GM12878 (cell line): ENCODE measurements at regions of chr17 and their contacts with region 1.

Region 1: DNA sequence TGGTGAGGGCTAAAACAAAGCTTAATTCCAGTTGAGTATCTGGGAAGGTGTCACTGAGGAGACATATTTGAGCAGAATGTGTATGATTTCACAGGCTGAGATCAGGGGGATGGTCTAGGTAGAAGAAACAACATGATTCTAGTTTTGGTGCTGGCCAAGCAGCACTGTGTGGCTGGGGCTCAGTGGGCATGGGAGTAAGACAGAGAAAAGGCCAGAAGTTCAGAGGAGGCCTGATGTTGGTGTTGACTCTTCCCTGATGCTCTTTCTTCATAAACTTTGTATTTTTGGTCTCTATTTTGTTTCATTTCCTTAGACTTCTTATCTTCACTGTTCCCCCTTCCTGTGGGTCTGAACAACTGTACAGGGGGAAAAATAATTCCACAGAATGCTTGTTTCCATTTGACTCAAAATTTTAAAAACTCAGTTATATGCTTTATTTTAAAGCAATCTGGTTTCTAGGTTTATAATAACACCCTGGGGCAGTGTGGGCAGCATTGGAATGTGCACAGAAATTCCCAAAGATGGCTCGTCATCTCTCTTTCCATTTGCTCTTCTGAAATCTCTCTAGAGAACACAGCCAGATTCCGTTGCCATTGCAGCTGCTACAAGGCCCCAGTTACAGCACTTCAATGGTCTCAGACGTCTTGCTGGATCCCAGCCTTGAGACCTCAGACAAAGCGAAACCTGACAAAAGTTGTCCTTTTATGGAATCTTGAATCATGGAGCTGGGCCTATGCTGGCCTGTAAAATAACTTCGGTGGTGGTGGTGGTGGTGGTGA is 68.3 kb downstream of the SNX11 start:
- DNase-seq: no peak
- ATAC-seq: no peak
- H3K4me3 ChIP-seq: no peak overlapping the region
- H3K27ac ChIP-seq: no peak overlapping the region
- H3K4me1 ChIP-seq: peaks cover 6% of the 10 kb centered on the region
- H3K27me3 ChIP-seq: no peaks in the 10 kb centered on the region
- CTCF ChIP-seq: no peak
- EP300 ChIP-seq: no peak
- POLR2A ChIP-seq: no peak
- RAD21 ChIP-seq: no peak

Region 2: DNA sequence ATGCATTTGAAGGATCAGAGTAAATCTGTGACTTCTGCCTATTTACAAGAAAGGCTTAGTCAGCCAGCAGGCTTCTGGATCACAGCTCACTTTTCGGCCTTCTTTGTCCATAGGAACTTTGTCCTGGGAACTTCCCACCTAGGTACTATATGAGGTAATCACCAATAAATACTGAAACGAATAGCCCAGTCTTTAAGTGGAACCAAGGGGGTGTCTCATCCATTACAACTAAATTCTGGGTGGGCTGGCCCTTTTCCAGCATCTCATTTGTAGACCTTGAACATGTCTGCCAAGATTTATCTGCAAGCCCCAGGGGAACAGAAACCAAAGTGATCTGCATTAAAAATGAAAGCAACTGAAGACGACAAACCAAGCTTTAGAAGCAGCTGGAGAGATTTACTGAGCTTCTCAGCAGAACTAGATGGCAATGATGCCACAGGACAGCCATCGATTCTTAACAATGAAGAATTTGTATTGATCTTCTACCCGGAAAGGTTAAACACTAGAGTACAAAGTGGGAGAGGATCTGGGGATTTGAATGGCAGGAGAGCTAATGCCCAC is 12.9 kb before region 1 on chr17:
- CTCF ChIA-PET with region 1: interaction called, 8 read pairs
- POLR2A ChIA-PET with region 1: interaction called, 3 read pairs
- RAD21 ChIA-PET with region 1: interaction called, 5 read pairs
- SMC1A ChIA-PET with region 1: interaction called, 11 read pairs
- in situ Hi-C with region 1: no loop called
- intact Hi-C with region 1: no loop called
- DNase-seq: no peak
- ATAC-seq: peak; percentile 61
- H3K4me3 ChIP-seq: no peak overlapping the region
- H3K27ac ChIP-seq: peak overlapping the region; percentile 45
- H3K4me1 ChIP-seq: peaks cover 6% of the 10 kb centered on the region; the same call in 1 of the 2 replicates
- H3K27me3 ChIP-seq: no peaks in the 10 kb centered on the region
- CTCF ChIP-seq: no peak
- EP300 ChIP-seq: no peak
- POLR2A ChIP-seq: no peak
- RAD21 ChIP-seq: no peak